Lower lobe of right lung (tissue), 2 donors: ENCODE measurements at regions of chr6 and their contacts with region 1.

Region 1: DNA sequence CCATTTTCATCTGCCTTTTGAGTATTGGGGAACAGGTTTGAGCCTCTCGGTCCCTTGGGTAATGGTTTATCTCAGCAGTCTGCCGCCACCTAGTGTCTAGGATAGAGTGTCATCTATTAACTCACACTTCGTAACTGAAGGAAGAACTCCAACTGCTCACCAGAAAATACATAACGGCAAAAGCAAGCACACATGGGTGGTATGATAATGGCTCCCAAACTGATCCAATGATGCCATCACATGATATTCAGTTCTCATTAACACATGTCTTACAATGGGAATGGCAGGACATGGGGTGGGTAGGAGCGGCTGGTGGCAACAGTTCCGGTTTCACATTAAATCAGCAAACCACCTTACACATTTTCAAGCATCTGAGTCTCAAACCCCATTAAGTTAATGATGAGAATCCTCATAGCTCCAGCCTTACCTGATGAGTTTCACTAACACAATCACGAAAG is 110.7 kb upstream of the PHACTR1 start:
- DNase-seq: no peak
- ATAC-seq: peak; percentile 83 to 89
- H3K4me3 ChIP-seq: no peak overlapping the region
- H3K27ac ChIP-seq: no peak overlapping the region
- H3K4me1 ChIP-seq: no peaks in the 10 kb centered on the region
- H3K27me3 ChIP-seq: no peaks in the 10 kb centered on the region
- CTCF ChIP-seq: peak; percentile 67

Region 2: DNA sequence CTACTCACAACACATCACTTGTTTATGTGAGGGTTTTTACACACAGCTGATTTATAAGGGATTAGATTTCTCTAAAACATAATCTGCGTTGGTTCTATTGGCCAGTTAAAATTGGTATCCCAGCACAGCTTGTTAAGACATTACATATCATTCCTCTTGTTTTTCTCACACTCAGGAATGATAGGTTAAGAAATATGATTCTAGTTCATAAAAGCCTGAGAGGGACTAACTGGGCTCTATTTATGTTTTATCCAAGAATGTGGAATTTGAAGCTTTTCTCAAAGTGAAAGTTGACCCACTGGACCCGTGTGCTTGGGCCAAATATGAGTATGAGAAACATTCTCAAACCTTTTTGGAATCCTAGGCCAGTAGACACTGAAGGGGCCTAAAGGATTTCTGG is 951.0 kb before region 1 on chr6:
- intact Hi-C with region 1: loop called (anchors 5 kb)
- DNase-seq: no peak
- ATAC-seq: no peak
- H3K4me3 ChIP-seq: no peak overlapping the region
- H3K27ac ChIP-seq: no peak overlapping the region
- H3K4me1 ChIP-seq: peaks cover 43% of the 10 kb centered on the region
- H3K27me3 ChIP-seq: no peaks in the 10 kb centered on the region
- CTCF ChIP-seq: no peak